ENCODE measurements at regions of chr12 and their contacts with region 1.

Region 1: GRCh38 chr12:68610370-68611093 is at the start of gene RAP1B:
- DNase-seq: peak; percentile 91
- ATAC-seq: peak; percentile 86
- H3K4me3 Mint-ChIP-seq: peak within 1 kb of the TSS; percentile 96
- H3K27ac Mint-ChIP-seq: peak within 1 kb of the TSS; percentile 98
- H3K4me1 Mint-ChIP-seq: peaks cover 40% of the 10 kb centered on the region
- H3K27me3 Mint-ChIP-seq: no peaks in the 10 kb centered on the region
- total RNA-seq, gene RAP1B: 256 to 268 TPM

Region 2: GRCh38 chr12:68358532-68359485 is 251.7 kb before region 1 on chr12:
- CTCF ChIA-PET with region 1: interaction called, 18 read pairs
- POLR2A ChIA-PET with region 1: interaction called, 7 read pairs
- DNase-seq: peak; percentile 81
- ATAC-seq: peak; percentile 89
- H3K4me3 Mint-ChIP-seq: no peak overlapping the region
- H3K27ac Mint-ChIP-seq: peak overlapping the region; percentile 27
- H3K4me1 Mint-ChIP-seq: peaks cover 23% of the 10 kb centered on the region
- H3K27me3 Mint-ChIP-seq: no peaks in the 10 kb centered on the region

Region 3: GRCh38 chr12:68482660-68483059 is 127.9 kb before region 1 on chr12:
- CTCF ChIA-PET with region 1: no interaction called
- POLR2A ChIA-PET with region 1: interaction called, 10 read pairs
- DNase-seq: peak; percentile 58
- ATAC-seq: peak; percentile 89
- H3K4me3 Mint-ChIP-seq: peak overlapping the region; percentile 0
- H3K27ac Mint-ChIP-seq: peak overlapping the region; percentile 65
- H3K4me1 Mint-ChIP-seq: peaks cover 44% of the 10 kb centered on the region
- H3K27me3 Mint-ChIP-seq: no peaks in the 10 kb centered on the region

Region 4: GRCh38 chr12:68538726-68539614 is 71.6 kb before region 1 on chr12:
- CTCF ChIA-PET with region 1: interaction called, 3 read pairs
- POLR2A ChIA-PET with region 1: interaction called, 22 read pairs
- DNase-seq: peak; percentile 87
- ATAC-seq: peak; percentile 95
- H3K4me3 Mint-ChIP-seq: peak overlapping the region; percentile 64
- H3K27ac Mint-ChIP-seq: peak overlapping the region; percentile 78
- H3K4me1 Mint-ChIP-seq: peaks cover 58% of the 10 kb centered on the region
- H3K27me3 Mint-ChIP-seq: no peaks in the 10 kb centered on the region

Region 5: GRCh38 chr12:68579254-68579653 is 31.3 kb before region 1 on chr12:
- CTCF ChIA-PET with region 1: interaction called, 4 read pairs
- POLR2A ChIA-PET with region 1: interaction called, 38 read pairs
- DNase-seq: peak; percentile 55
- ATAC-seq: peak; percentile 67
- H3K4me3 Mint-ChIP-seq: peak overlapping the region; percentile 56
- H3K27ac Mint-ChIP-seq: peak overlapping the region; percentile 85
- H3K4me1 Mint-ChIP-seq: peaks cover 32% of the 10 kb centered on the region
- H3K27me3 Mint-ChIP-seq: no peaks in the 10 kb centered on the region

Region 6: GRCh38 chr12:68587448-68587873 is 23.1 kb before region 1 on chr12:
- CTCF ChIA-PET with region 1: interaction called, 6 read pairs
- POLR2A ChIA-PET with region 1: interaction called, 38 read pairs
- DNase-seq: peak; percentile 70
- ATAC-seq: peak; percentile 81
- H3K4me3 Mint-ChIP-seq: no peak overlapping the region
- H3K27ac Mint-ChIP-seq: peak overlapping the region; percentile 88
- H3K4me1 Mint-ChIP-seq: peaks cover 51% of the 10 kb centered on the region
- H3K27me3 Mint-ChIP-seq: no peaks in the 10 kb centered on the region

Region 7: DNA sequence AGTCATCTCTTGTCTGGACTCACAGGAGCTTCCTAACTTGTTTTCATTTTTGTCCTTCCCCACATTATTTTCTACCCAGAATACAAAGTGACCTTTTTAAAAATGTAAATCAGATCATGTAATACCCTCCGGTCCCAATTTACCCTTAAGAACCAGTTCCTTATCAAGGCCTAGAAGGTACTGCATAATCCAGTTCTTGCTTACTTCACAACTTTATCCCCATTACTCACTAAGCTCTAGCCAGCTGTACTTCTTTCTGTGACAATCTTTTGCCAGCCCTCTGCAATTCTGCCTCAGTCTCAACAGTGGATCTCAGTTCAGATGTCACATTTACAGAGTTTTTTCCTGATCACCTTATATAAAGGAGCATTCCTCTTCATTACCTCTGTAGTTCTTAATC is 11.7 kb after region 1 on chr12:
- CTCF ChIA-PET with region 1: interaction called, 6 read pairs
- POLR2A ChIA-PET with region 1: interaction called, 12 read pairs
- DNase-seq: no peak
- ATAC-seq: no peak
- H3K4me3 Mint-ChIP-seq: no peak overlapping the region
- H3K27ac Mint-ChIP-seq: peak overlapping the region; percentile 37
- H3K4me1 Mint-ChIP-seq: peaks cover 78% of the 10 kb centered on the region
- H3K27me3 Mint-ChIP-seq: no peaks in the 10 kb centered on the region